Head of caudate nucleus (tissue), 42 donors: ENCODE measurements at regions of chr1 and their contacts with region 1.

Region 1: DNA sequence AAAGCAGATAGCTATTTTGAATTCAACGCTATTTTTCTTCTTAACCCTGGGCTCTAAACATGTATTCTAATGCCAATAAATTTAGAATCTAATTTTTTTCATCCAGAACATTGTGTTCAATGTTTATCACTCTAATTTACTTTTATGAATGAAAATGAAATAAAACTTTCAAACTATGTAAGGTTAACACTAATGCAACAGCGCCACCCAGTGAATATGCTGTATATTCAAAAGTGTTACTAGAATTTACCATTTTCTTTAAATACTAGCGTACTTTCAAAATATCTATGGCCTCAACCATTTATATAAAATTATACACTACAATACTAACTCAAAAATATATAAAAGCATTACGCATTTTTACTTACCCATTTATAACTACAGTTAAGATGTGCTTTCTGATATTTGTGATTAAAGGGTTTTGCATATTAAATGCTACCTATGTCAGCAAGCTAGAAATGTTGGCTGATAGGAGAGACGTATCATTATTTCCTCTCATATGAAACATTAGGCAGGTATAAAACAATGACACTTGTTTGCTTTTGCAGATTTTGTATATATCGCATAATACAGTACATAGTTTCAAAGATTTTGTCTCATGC is 5.9 kb upstream of the NUF2 start:
- DNase-seq: peak in 26 of 42 donors; percentile 9 to 75 (median 40)

Region 2: GRCh38 chr1:162847839-162848453 is 467.9 kb before region 1 on chr1:
- intact Hi-C with region 1: loop called (anchors 10 kb)
- DNase-seq: peak; percentile 59 to 94 (median 87)

Region 3: DNA sequence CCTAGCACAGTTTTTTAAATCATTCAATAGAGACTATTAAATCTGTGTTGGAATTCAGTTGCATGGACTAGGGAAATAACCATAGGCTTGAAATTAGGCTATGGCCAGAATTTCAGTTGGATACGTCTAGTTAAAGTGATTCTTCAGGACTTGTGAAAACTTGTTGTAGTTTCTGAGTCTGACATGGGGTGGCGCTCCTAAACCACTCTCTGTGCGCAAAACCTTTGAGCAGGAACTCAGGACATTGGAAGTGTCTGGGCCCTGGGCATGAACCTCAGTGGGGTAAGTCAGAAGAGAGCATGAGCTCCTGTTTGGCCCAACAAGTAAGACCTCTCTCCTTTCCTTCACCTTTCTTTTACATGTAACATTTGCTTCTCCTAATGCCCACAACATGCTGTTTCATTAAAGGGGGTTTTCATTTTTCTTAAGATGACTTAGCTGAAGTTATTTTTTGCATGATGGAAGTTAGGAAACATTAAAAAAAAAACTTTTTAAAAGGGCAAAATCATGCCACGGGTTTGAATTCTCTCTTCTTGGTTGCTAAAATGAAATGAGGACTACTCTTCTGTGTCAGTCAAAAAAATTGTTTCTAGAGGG is 437.8 kb before region 1 on chr1:
- intact Hi-C with region 1: loop called (anchors 10 kb)
- DNase-seq: peak; percentile 35 to 85 (median 63)